ENCODE measurements at regions of chr9 and their contacts with region 1.

Region 1: GRCh38 chr9:6055213-6055612 is 39.8 kb upstream of the RANBP6 start:
- DNase-seq: peak in 4 of 9 experiments; percentile 32 to 80 (median 59)
- ATAC-seq: peak; percentile 69
- H3K4me3 ChIP-seq: no peak overlapping the region
- H3K4me3 Mint-ChIP-seq: no peak overlapping the region
- H3K27ac ChIP-seq: no peak overlapping the region
- H3K27ac Mint-ChIP-seq: no peak overlapping the region
- H3K4me1 ChIP-seq: no peaks in the 10 kb centered on the region
- H3K4me1 Mint-ChIP-seq: peaks cover 3% of the 10 kb centered on the region
- H3K27me3 ChIP-seq: no peaks in the 10 kb centered on the region
- H3K27me3 Mint-ChIP-seq: peaks cover 5% of the 10 kb centered on the region
- CTCF ChIP-seq: peak; percentile 40

Region 2: GRCh38 chr9:6305954-6306563 is 250.8 kb after region 1 on chr9:
- CTCF ChIA-PET with region 1: interaction called, 6 read pairs
- POLR2A ChIA-PET with region 1: no interaction called
- intact Hi-C with region 1: loop called in 1 of 2 experiments (anchors 1 kb)
- DNase-seq: peak in 2 of 9 experiments; percentile 29 to 38
- ATAC-seq: no peak
- H3K4me3 ChIP-seq: no peak overlapping the region
- H3K4me3 Mint-ChIP-seq: no peak overlapping the region
- H3K27ac ChIP-seq: no peak overlapping the region
- H3K27ac Mint-ChIP-seq: no peak overlapping the region
- H3K4me1 ChIP-seq: no peaks in the 10 kb centered on the region
- H3K4me1 Mint-ChIP-seq: no peaks in the 10 kb centered on the region
- H3K27me3 ChIP-seq: no peaks in the 10 kb centered on the region
- H3K27me3 Mint-ChIP-seq: peaks cover 14% of the 10 kb centered on the region
- CTCF ChIP-seq: no peak

Region 3: GRCh38 chr9:6566409-6567139 is 511.4 kb after region 1 on chr9:
- CTCF ChIA-PET with region 1: interaction called, 3 read pairs
- POLR2A ChIA-PET with region 1: no interaction called
- intact Hi-C with region 1: loop called in 1 of 2 experiments (anchors 1 kb)
- DNase-seq: peak in 1 of 9 experiments; percentile 12
- ATAC-seq: no peak
- H3K4me3 ChIP-seq: no peak overlapping the region
- H3K4me3 Mint-ChIP-seq: no peak overlapping the region
- H3K27ac ChIP-seq: no peak overlapping the region
- H3K27ac Mint-ChIP-seq: no peak overlapping the region
- H3K4me1 ChIP-seq: no peaks in the 10 kb centered on the region
- H3K4me1 Mint-ChIP-seq: no peaks in the 10 kb centered on the region
- H3K27me3 ChIP-seq: peaks cover 0 to 2% of the 10 kb centered on the region in 2 experiments
- H3K27me3 Mint-ChIP-seq: no peaks in the 10 kb centered on the region
- CTCF ChIP-seq: no peak